B cell (primary cell): ENCODE measurements at regions of chr17 and their contacts with region 1.

Region 1: GRCh38 chr17:42744806-42745617 is at the start of gene EZH1:
- DNase-seq: peak; percentile 95
- ATAC-seq: peak; percentile 86
- H3K4me3 ChIP-seq: peak within 1 kb of the TSS; percentile 56 to 76 (median 70)
- H3K4me3 Mint-ChIP-seq: peak within 1 kb of the TSS; percentile 99
- H3K27ac ChIP-seq: peak within 1 kb of the TSS; percentile 67 to 92
- H3K27ac Mint-ChIP-seq: peak within 1 kb of the TSS; percentile 99
- H3K4me1 ChIP-seq: peaks cover 25 to 27% of the 10 kb centered on the region in 2 donors
- H3K4me1 Mint-ChIP-seq: peaks cover 29% of the 10 kb centered on the region
- H3K27me3 ChIP-seq: peaks cover 0 to 16% (median under 1%) of the 10 kb centered on the region in 4 experiments
- H3K27me3 Mint-ChIP-seq: peaks cover 18% of the 10 kb centered on the region
- CTCF ChIP-seq: no peak
- total RNA-seq, gene EZH1: 169 and 180 TPM in 2 replicates

Region 2: DNA sequence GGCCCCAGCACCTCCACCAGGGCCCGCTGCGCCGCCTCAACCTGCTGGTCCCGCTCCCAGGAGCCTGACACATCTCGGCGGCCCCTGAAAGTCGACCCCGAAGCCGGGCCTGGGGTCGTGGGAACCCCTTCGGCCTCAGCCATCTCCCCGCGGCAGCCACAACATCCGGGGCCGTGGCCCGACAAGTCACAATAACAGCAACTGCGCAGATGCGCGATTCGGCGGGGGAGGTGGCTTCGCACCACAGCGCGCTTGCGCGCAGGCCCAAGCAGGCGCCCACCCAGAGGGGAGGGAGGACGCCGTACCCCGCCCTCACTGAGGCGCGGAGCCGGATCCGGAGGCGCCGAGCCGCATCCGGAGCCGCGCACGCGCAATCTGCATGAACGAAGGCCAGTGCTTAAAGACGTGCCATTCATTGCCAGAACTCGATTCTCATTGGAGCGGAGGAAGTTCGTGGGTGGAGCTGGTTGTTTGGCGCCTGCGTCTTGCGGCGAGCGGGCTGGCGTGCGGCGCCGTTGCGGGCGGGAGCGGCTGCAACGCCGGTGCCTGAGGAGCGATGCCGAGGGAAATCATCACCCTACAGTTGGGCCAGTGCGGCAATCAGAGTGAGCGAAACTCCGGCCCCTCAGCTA is 135.7 kb before region 1 on chr17 and contains the starts of genes RETREG3 and TUBG1:
- CTCF ChIA-PET with region 1: no interaction called
- POLR2A ChIA-PET with region 1: no interaction called
- intact Hi-C with region 1: loop called (anchors 1 kb)
- DNase-seq: peak; percentile 100
- ATAC-seq: peak; percentile 91
- H3K4me3 ChIP-seq: peak within 1 kb of the TSS; percentile 73 to 95 (median 85)
- H3K4me3 Mint-ChIP-seq: peak within 1 kb of the TSS; percentile 100
- H3K27ac ChIP-seq: peak within 1 kb of the TSS; percentile 79 to 95
- H3K27ac Mint-ChIP-seq: peak within 1 kb of the TSS; percentile 98
- H3K4me1 ChIP-seq: peaks cover 38 to 42% of the 10 kb centered on the region in 2 donors
- H3K4me1 Mint-ChIP-seq: peaks cover 51% of the 10 kb centered on the region
- H3K27me3 ChIP-seq: no peaks in the 10 kb centered on the region
- H3K27me3 Mint-ChIP-seq: no peaks in the 10 kb centered on the region
- CTCF ChIP-seq: peak; percentile 37
- total RNA-seq, gene RETREG3: 103 and 108 TPM in 2 replicates
- total RNA-seq, gene TUBG1: 15.7 and 17.2 TPM in 2 replicates

Region 3: DNA sequence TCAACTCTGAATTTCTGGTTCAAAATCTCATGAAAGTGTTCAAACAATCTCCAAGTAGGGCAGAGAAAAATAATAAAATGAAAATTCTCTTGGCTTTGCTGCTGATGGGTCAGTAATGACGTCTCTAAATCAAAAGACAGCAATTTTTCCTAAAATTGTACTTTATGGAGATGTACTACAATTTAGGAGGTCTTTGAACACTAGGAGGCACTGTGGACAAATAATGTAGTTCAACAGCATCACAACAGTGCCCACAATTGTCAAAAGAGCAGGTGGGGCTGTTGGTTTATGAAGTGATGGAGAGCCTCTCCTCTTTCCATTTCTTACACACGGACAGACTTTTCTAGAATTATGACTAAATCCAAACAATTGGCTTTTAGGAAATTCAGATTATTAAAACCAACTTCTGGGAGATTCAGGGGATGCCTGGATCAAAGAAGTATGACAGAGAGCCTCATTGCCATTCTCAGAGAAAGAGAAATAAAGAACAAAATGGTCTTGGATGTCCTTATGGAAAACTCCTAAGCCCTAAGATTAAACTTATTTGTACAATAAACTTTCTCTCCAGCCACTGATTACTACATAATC is 23.9 kb before region 1 on chr17:
- CTCF ChIA-PET with region 1: interaction called, 3 read pairs
- POLR2A ChIA-PET with region 1: interaction called, 3 read pairs
- intact Hi-C with region 1: loop called (anchors 1 kb)
- DNase-seq: peak; percentile 78
- ATAC-seq: peak; percentile 82
- H3K4me3 ChIP-seq: no peak overlapping the region
- H3K4me3 Mint-ChIP-seq: no peak overlapping the region
- H3K27ac ChIP-seq: no peak overlapping the region
- H3K27ac Mint-ChIP-seq: peak overlapping the region; percentile 21
- H3K4me1 ChIP-seq: no peaks in the 10 kb centered on the region
- H3K4me1 Mint-ChIP-seq: peaks cover 3% of the 10 kb centered on the region
- H3K27me3 ChIP-seq: no peaks in the 10 kb centered on the region
- H3K27me3 Mint-ChIP-seq: no peaks in the 10 kb centered on the region
- CTCF ChIP-seq: peak; percentile 80

Region 4: GRCh38 chr17:42760652-42761581 is 15.9 kb after region 1 on chr17 and contains the start of gene RAMP2:
- CTCF ChIA-PET with region 1: interaction called, 8 read pairs
- POLR2A ChIA-PET with region 1: no interaction called
- intact Hi-C with region 1: loop called (anchors 1 kb)
- DNase-seq: peak; percentile 45
- ATAC-seq: peak; percentile 32
- H3K4me3 ChIP-seq: peak within 1 kb of the TSS in 4 of 5 experiments; percentile 13 to 54 (median 39)
- H3K4me3 Mint-ChIP-seq: peak within 1 kb of the TSS; percentile 85
- H3K27ac ChIP-seq: no peak within 1 kb of the TSS
- H3K27ac Mint-ChIP-seq: peak within 1 kb of the TSS; percentile 37
- H3K4me1 ChIP-seq: peaks cover 19 to 23% of the 10 kb centered on the region in 2 donors
- H3K4me1 Mint-ChIP-seq: peaks cover 23% of the 10 kb centered on the region
- H3K27me3 ChIP-seq: peaks cover 0 to 48% (median 18%) of the 10 kb centered on the region in 4 experiments
- H3K27me3 Mint-ChIP-seq: peaks cover 50% of the 10 kb centered on the region
- CTCF ChIP-seq: no peak
- total RNA-seq, gene RAMP2: not detected in 2 replicates

Region 5: GRCh38 chr17:42773290-42774035 is 28.5 kb after region 1 on chr17 and contains the start of gene VPS25:
- CTCF ChIA-PET with region 1: no interaction called
- POLR2A ChIA-PET with region 1: interaction called, 6 read pairs
- intact Hi-C with region 1: loop called (anchors 1 kb)
- DNase-seq: peak; percentile 87
- ATAC-seq: peak; percentile 89
- H3K4me3 ChIP-seq: peak within 1 kb of the TSS; percentile 71 to 88 (median 82)
- H3K4me3 Mint-ChIP-seq: peak within 1 kb of the TSS; percentile 99
- H3K27ac ChIP-seq: peak within 1 kb of the TSS; percentile 81 to 85
- H3K27ac Mint-ChIP-seq: peak within 1 kb of the TSS; percentile 98
- H3K4me1 ChIP-seq: peaks cover 16 to 17% of the 10 kb centered on the region in 2 donors
- H3K4me1 Mint-ChIP-seq: peaks cover 23% of the 10 kb centered on the region
- H3K27me3 ChIP-seq: no peaks in the 10 kb centered on the region
- H3K27me3 Mint-ChIP-seq: no peaks in the 10 kb centered on the region
- CTCF ChIP-seq: no peak
- total RNA-seq, gene VPS25: 38.7 and 38.8 TPM in 2 replicates

Region 6: GRCh38 chr17:42798383-42799380 is 53.7 kb after region 1 on chr17 and contains the starts of genes CNTD1 and COA3:
- CTCF ChIA-PET with region 1: no interaction called
- POLR2A ChIA-PET with region 1: no interaction called
- intact Hi-C with region 1: loop called (anchors 1 kb)
- DNase-seq: peak; percentile 79
- ATAC-seq: peak; percentile 99
- H3K4me3 ChIP-seq: peak within 1 kb of the TSS; percentile 59 to 90 (median 76)
- H3K4me3 Mint-ChIP-seq: peak within 1 kb of the TSS; percentile 96
- H3K27ac ChIP-seq: peak within 1 kb of the TSS; percentile 4 to 69
- H3K27ac Mint-ChIP-seq: peak within 1 kb of the TSS; percentile 83
- H3K4me1 ChIP-seq: peaks cover 14 to 21% of the 10 kb centered on the region in 2 donors
- H3K4me1 Mint-ChIP-seq: peaks cover 27% of the 10 kb centered on the region
- H3K27me3 ChIP-seq: no peaks in the 10 kb centered on the region
- H3K27me3 Mint-ChIP-seq: peaks cover 5% of the 10 kb centered on the region
- CTCF ChIP-seq: no peak
- total RNA-seq, gene CNTD1: not detected in 2 replicates
- total RNA-seq, gene COA3: 31.9 and 32.1 TPM in 2 replicates

Region 7: GRCh38 chr17:43151880-43152456 is 407.0 kb after region 1 on chr17:
- CTCF ChIA-PET with region 1: no interaction called
- POLR2A ChIA-PET with region 1: no interaction called
- intact Hi-C with region 1: no loop called
- DNase-seq: no peak
- ATAC-seq: no peak
- H3K4me3 ChIP-seq: no peak overlapping the region
- H3K4me3 Mint-ChIP-seq: no peak overlapping the region
- H3K27ac ChIP-seq: no peak overlapping the region
- H3K27ac Mint-ChIP-seq: no peak overlapping the region
- H3K4me1 ChIP-seq: no peaks in the 10 kb centered on the region
- H3K4me1 Mint-ChIP-seq: no peaks in the 10 kb centered on the region
- H3K27me3 ChIP-seq: no peaks in the 10 kb centered on the region
- H3K27me3 Mint-ChIP-seq: no peaks in the 10 kb centered on the region
- CTCF ChIP-seq: no peak

Region 8: DNA sequence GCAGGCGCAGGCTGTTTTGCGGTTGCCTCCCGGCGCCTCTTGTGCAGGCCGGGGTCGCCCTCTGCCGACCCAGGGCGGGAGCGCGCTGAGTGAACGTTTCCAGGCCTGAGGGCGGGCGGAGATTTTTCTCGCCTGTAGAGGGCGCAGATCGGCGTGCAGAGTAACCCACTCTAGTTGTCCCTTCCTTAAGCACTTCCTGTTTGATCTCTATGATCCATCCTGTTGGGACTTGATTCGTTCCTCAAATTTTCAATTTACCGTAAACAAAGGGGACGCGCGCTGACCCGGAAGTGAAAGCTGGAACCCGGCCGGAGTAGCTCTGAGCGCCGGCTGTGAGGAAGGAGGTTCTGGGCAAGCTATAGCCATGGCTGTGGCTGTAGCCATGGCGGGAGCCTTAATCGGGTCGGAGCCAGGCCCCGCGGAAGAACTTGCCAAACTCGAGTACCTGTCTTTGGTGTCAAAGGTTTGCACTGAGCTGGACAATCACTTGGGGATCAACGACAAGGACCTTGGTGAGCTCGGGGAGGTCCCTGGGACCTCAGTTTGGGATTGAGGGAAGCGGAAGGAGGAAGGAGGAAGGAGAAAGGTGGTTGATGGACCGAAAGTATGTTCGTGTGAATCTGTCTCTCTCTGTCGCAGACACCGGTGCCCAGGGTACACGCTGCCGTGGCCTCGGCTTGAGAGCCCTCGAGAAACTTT is 738.8 kb after region 1 on chr17 and contains the start of gene DHX8:
- CTCF ChIA-PET with region 1: no interaction called
- POLR2A ChIA-PET with region 1: no interaction called
- intact Hi-C with region 1: loop called (anchors 10 kb)
- DNase-seq: peak; percentile 99
- ATAC-seq: peak; percentile 98
- H3K4me3 ChIP-seq: peak within 1 kb of the TSS; percentile 84 to 99 (median 98)
- H3K4me3 Mint-ChIP-seq: peak within 1 kb of the TSS; percentile 100
- H3K27ac ChIP-seq: peak within 1 kb of the TSS; percentile 82 to 86
- H3K27ac Mint-ChIP-seq: peak within 1 kb of the TSS; percentile 98
- H3K4me1 ChIP-seq: peaks cover 17 to 23% of the 10 kb centered on the region in 2 donors
- H3K4me1 Mint-ChIP-seq: peaks cover 29% of the 10 kb centered on the region
- H3K27me3 ChIP-seq: no peaks in the 10 kb centered on the region
- H3K27me3 Mint-ChIP-seq: no peaks in the 10 kb centered on the region
- CTCF ChIP-seq: peak; percentile 100
- total RNA-seq, gene DHX8: 63.3 and 64.4 TPM in 2 replicates